ENCODE measurements at regions of chr1 and their contacts with region 1.

Region 1: GRCh38 chr1:23367791-23368561 is 1.7 kb downstream of the ZNF436 start:
- DNase-seq: peak; percentile 98
- H3K4me3 ChIP-seq: peak overlapping the region; percentile 70
- H3K27ac ChIP-seq: peak overlapping the region; percentile 93
- H3K4me1 ChIP-seq: peaks cover 17% of the 10 kb centered on the region
- H3K27me3 ChIP-seq: no peaks in the 10 kb centered on the region
- CTCF ChIP-seq: no peak

Region 2: GRCh38 chr1:23100074-23100748 is 267.8 kb before region 1 on chr1:
- intact Hi-C with region 1: no loop called
- DNase-seq: no peak
- H3K4me3 ChIP-seq: no peak overlapping the region
- H3K27ac ChIP-seq: no peak overlapping the region
- H3K4me1 ChIP-seq: peaks cover 18% of the 10 kb centered on the region
- H3K27me3 ChIP-seq: no peaks in the 10 kb centered on the region
- CTCF ChIP-seq: no peak

Region 3: GRCh38 chr1:23403735-23404486 is 35.9 kb after region 1 on chr1:
- intact Hi-C with region 1: no loop called
- DNase-seq: peak; percentile 95
- H3K4me3 ChIP-seq: no peak overlapping the region
- H3K27ac ChIP-seq: peak overlapping the region; percentile 74
- H3K4me1 ChIP-seq: peaks cover 10% of the 10 kb centered on the region
- H3K27me3 ChIP-seq: no peaks in the 10 kb centered on the region
- CTCF ChIP-seq: peak; percentile 95

Region 4: GRCh38 chr1:23484253-23485001 is 116.5 kb after region 1 on chr1:
- intact Hi-C with region 1: loop called (anchors 10 kb)
- DNase-seq: peak; percentile 97
- H3K4me3 ChIP-seq: peak overlapping the region; percentile 81
- H3K27ac ChIP-seq: peak overlapping the region; percentile 68
- H3K4me1 ChIP-seq: no peaks in the 10 kb centered on the region
- H3K27me3 ChIP-seq: peaks cover 2% of the 10 kb centered on the region
- CTCF ChIP-seq: no peak